PC-9 (cell line): ENCODE measurements at regions of chr19 and their contacts with region 1.

Region 1: GRCh38 chr19:555474-555808 is 11.6 kb downstream of the GZMM start:
- DNase-seq: no peak
- H3K4me3 ChIP-seq: no peak overlapping the region
- H3K27ac ChIP-seq: no peak overlapping the region
- H3K4me1 ChIP-seq: peaks cover 24% of the 10 kb centered on the region
- H3K27me3 ChIP-seq: no peaks in the 10 kb centered on the region
- CTCF ChIP-seq: no peak

Region 2: DNA sequence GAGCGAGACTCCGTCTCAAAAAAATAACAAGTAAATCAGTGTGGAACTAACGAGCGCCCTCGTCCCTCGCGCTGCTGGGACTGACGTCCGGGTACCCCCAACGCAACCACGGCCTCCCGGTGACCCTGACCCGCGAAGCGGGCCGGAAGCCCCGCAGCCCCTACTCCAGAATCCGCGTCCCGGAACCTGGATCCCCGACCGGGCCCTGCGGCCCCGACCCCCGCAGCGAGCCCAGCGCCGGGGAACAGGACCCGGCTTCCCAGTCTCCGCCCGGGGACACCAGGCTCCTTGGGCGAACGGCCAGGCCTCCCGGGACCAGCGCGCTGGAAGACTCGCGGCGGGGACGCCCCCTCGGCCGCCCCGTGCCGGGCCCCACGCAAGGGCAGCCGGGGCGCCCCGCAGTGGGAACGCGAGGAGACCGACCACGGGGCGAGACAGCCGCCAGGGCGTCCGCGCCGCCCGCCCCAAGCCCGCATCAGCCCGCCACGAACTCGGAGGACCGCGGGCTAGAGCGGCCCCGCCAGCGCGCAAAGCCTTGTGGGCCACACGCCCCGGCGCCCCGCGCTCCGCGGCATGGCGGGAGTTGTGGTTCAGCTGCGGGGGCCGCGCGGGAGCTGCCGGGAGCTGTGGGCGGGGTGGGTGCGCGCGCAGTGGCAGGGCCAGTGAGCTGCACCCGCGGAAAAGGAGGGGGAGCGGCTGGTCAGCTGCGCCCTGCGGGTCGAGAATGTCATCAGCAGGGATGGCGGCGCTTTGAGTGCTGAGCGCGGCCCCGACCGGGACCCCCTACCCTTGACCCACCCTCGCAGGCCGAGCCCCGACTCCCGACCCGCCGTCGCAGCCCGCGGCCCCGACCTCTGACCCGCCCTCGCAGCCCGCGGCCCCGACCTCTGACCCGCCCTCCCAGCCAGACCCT is 66.7 kb before region 1 on chr19:
- CTCF ChIA-PET with region 1: no interaction called
- POLR2A ChIA-PET with region 1: no interaction called
- intact Hi-C with region 1: no loop called
- DNase-seq: peak; percentile 75 to 94
- H3K4me3 ChIP-seq: peak overlapping the region; percentile 89
- H3K27ac ChIP-seq: peak overlapping the region; percentile 57
- H3K4me1 ChIP-seq: peaks cover 11% of the 10 kb centered on the region; the same call in 1 of the 2 replicates
- H3K27me3 ChIP-seq: no peaks in the 10 kb centered on the region
- CTCF ChIP-seq: no peak

Region 3: GRCh38 chr19:510606-511100 is 44.8 kb before region 1 on chr19:
- CTCF ChIA-PET with region 1: no interaction called
- POLR2A ChIA-PET with region 1: no interaction called
- intact Hi-C with region 1: no loop called
- DNase-seq: peak; percentile 55 to 74
- H3K4me3 ChIP-seq: no peak overlapping the region
- H3K27ac ChIP-seq: no peak overlapping the region
- H3K4me1 ChIP-seq: 0 out of 2 replicates have a peak, but pooled peaks cover 6% of the 10 kb centered on the region
- H3K27me3 ChIP-seq: no peaks in the 10 kb centered on the region
- CTCF ChIP-seq: peak; percentile 94

Region 4: GRCh38 chr19:588093-588740 is 32.8 kb after region 1 on chr19:
- CTCF ChIA-PET with region 1: no interaction called
- POLR2A ChIA-PET with region 1: interaction called, 12 read pairs
- intact Hi-C with region 1: no loop called
- DNase-seq: peak; percentile 75 to 92
- H3K4me3 ChIP-seq: peak overlapping the region; percentile 9; the same call in 1 of the 2 replicates
- H3K27ac ChIP-seq: no peak overlapping the region
- H3K4me1 ChIP-seq: peaks cover 15% of the 10 kb centered on the region; the same call in 1 of the 2 replicates
- H3K27me3 ChIP-seq: peaks cover 11% of the 10 kb centered on the region; the same call in 1 of the 2 replicates
- CTCF ChIP-seq: peak; percentile 69

Region 5: GRCh38 chr19:677201-677600 is 121.8 kb after region 1 on chr19:
- CTCF ChIA-PET with region 1: no interaction called
- POLR2A ChIA-PET with region 1: interaction called, 12 read pairs
- intact Hi-C with region 1: no loop called
- DNase-seq: peak; percentile 70 to 92
- H3K4me3 ChIP-seq: peak overlapping the region; percentile 72
- H3K27ac ChIP-seq: peak overlapping the region; percentile 43; the same call in 1 of the 2 replicates
- H3K4me1 ChIP-seq: peaks cover 30% of the 10 kb centered on the region
- H3K27me3 ChIP-seq: no peaks in the 10 kb centered on the region
- CTCF ChIP-seq: no peak